ENCODE measurements at regions of chr14 and their contacts with region 1.

Region 1: DNA sequence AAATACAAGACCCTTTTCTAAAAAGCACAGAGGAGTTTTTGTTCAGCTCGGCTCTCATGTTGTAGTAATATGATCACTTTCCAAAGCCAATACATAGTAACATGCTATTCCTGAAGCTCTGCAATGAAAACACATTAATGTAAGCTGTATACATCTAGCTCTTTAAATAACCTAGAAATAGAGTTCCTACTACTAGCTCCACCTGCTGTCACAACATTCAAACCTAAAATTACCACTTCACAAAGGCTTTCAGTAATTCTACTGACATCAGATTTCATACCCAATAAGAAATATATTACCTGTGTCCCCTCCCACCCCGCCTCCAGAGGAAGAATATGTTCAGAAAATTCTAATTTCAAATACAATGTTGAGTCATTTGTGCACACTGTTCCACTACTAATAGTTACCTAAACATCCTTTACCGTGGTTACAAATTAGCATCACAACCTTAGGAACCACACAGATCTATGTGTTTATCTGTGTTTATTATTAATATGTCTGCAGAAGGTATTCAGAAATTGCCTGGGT is 17.8 kb downstream of the EFCAB11 start:
- DNase-seq: no peak
- H3K4me3 Mint-ChIP-seq: no peak overlapping the region
- H3K27ac Mint-ChIP-seq: no peak overlapping the region
- H3K4me1 Mint-ChIP-seq: no peaks in the 10 kb centered on the region
- H3K27me3 Mint-ChIP-seq: no peaks in the 10 kb centered on the region
- CTCF ChIP-seq: no peak

Region 2: GRCh38 chr14:89973234-89973823 is 36.6 kb after region 1 on chr14:
- CTCF ChIA-PET with region 1: interaction called, 8 read pairs
- intact Hi-C with region 1: loop called (anchors 1 kb)
- DNase-seq: peak; percentile 69
- H3K4me3 Mint-ChIP-seq: no peak overlapping the region
- H3K27ac Mint-ChIP-seq: no peak overlapping the region
- H3K4me1 Mint-ChIP-seq: no peaks in the 10 kb centered on the region
- H3K27me3 Mint-ChIP-seq: no peaks in the 10 kb centered on the region
- CTCF ChIP-seq: peak; percentile 45

Measured in Calu3 (cell line).